Left cardiac atrium (tissue), 4 donors: ENCODE measurements at regions of chr1 and their contacts with region 1.

Region 1: DNA sequence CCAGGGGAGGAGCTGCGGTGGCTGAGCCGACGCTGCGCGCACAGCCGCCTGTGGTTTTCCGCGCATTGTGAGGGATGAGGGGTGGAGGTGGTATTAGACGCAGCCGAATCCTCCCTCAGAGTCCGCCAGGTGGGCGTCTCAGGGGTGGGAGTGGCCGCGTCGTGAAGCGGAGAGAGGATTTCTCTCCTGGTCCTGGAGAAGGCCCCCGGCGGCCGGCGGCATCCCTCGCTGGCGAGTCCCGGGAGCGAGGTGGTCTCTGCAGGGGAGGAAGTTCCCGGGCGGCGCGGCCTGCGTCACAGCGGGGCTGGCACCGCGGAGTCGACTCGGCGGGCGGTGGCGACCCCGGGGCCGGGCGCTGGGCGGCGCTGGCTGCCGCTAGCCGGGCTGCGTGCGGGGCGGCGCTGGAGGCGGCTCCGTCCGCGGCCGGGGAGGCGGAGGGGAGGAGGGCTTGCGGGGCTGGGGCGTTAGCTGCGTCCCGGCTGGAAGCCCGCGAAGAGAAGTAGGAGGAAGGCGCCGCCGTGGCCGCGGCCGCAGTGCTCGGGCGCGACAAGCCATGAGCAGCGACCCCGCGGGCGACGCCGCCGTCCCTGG is at the start of gene LRRC8C:
- DNase-seq: peak; percentile 90
- ATAC-seq: peak; percentile 96 to 97
- total RNA-seq, gene LRRC8C: 8.4 to 14.4 TPM

Region 2: GRCh38 chr1:89519779-89520358 is 112.9 kb before region 1 on chr1:
- intact Hi-C with region 1: no loop called
- DNase-seq: no peak
- ATAC-seq: no peak

Region 3: DNA sequence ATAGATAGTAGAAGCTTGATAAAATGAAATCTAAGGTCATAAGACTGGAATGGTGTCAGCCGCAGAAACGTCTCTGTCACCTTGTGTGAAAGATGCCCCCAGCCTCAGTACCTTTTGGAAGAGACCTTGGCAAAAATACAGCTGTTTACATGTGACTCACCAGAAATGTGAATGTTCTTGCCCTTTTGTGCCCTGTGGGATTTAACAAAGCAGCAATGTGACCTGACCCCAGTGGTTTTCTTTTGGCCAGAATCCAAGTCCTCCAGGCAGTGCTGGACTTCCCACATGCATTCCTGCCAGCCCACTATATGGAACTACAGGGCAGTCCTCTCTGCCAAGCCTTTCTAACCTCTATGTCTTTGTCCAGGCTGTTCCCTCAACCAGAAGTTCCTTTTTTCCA is 27.1 kb before region 1 on chr1:
- intact Hi-C with region 1: loop called in 1 of 2 experiments (anchors 1 kb)
- DNase-seq: no peak
- ATAC-seq: no peak

Region 4: DNA sequence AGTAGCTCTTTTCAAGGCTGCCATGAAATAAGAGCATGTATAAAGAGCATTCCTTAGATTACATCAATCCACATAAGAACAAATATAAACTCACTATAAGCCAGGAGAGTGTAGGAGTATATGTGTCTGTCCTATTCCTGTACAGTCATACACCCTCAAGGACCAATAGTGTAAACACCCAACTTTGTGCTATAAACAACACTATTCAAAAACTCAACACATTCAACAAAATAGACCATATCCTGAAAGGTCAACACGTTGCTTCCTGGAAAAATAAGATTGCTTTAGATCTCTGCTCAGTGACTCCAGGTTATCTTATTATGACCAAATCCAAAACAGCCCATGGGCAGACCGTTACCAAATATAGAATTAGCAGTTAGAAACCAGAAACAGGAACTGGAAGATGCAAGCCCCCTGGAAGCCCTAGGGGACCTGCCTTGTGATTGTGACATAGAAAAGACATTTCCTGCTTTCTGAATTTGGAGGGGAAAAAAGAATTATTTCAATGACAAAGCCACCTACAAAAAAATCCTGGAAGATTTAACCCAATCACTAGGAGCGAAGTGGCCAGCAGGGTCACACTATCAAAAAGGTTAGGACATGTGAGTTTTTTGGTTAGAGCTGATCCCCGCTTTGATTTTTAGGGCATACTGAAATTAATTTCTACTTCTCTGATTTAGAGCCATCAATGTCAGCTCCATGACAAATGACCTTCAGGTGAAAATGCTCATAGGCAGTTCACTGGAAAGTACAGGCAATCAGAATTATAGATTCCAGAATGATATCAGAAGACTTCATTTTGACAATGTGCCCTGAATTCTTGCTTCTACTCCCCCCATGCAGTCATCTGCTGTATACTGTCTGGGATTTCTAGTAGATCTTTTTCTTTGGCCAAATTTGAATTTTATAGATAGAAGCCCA is 60.1 kb after region 1 on chr1:
- intact Hi-C with region 1: loop called in 1 of 2 experiments (anchors 10 kb)
- DNase-seq: peak; percentile 27
- ATAC-seq: peak; percentile 53 to 75

Region 5: DNA sequence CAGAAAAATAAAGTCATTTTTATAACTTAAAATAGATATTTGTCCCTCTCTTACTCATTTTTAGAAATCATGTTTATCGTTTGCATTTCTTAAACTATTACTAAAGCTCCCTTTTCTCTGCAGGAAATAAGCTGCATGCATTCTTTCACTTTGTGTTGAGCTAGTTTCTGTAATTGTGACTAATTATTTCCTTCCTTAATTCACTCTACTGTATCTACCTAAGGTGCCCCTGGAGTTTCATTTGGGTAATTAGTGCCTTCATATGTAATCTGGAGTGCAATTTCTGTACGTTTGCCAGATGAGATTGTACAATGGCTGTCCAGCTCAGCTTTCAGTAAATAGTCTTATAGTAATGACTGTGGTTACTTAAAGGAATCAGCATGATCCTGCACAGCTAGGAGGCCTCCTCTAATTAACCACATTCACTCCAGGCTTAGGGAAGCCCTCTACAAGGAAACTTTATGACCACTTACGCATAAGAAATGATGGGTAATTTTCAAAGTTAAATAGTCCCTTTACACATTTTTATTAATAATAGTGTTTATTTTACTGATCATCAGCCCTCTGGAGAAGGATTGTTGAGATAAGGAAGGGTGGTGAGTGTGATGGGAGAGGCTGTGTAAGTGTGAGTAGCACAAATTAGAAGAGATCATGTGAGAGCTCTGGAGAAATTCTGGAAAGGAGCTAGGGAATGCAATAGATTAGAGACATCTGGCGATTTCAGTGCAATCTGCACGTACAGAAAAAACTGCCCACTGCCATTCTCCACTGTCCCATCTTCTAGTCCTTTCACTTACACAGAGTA is 87.0 kb after region 1 on chr1:
- intact Hi-C with region 1: loop called in 1 of 2 experiments (anchors 2 kb)
- DNase-seq: no peak
- ATAC-seq: peak; percentile 21 to 23

Region 6: DNA sequence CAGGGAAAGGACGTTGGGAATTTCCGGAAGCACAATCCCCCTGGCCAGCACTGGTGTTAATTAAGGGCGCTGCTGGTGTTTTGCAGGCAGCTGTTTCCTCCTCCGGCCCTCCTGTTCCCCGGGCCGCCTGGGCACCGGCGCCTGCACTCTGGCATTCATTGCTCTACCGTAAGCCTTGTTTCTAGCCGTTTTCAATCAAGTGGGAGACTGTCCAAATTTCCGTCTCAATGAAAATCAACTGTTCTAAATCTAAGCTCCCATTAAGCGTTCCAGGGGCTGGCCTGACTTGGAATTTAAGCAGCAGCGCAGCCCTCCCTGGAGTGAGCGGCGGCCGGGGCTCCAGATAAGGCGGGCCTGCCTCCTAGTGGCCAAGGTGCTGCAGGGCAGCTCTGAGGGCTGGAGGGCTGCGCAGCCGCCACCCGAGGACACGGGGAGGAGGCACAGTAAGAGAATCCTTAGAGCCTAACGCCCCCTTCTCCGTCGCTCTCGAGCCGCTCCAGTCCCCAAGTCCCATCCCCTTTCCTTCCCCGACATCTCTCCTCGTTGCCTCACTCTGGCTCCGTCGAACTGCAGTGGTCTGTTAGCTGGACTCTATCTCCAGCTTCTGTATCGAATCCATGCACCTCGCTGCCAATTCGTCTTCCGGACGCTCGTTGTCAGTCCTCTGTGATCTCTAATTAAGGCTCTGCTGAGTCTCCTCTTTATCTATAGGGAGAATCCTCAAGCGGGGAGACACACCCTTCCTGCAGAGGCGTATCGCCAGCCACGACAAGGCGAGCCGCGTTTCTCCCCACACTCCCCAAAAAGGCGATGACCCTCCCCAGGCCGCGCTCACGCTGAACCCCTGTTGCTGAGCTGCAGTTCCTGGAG is 130.3 kb after region 1 on chr1:
- intact Hi-C with region 1: loop called (anchors 2 to 5 kb)
- DNase-seq: peak; percentile 90
- ATAC-seq: peak; percentile 98 to 99